Posterior vena cava (tissue), 2 donors: ENCODE measurements at regions of chr14 and their contacts with region 1.

Region 1: GRCh38 chr14:104639889-104640548 is 35.4 kb upstream of the TMEM179 start:
- DNase-seq: no peak

Region 2: DNA sequence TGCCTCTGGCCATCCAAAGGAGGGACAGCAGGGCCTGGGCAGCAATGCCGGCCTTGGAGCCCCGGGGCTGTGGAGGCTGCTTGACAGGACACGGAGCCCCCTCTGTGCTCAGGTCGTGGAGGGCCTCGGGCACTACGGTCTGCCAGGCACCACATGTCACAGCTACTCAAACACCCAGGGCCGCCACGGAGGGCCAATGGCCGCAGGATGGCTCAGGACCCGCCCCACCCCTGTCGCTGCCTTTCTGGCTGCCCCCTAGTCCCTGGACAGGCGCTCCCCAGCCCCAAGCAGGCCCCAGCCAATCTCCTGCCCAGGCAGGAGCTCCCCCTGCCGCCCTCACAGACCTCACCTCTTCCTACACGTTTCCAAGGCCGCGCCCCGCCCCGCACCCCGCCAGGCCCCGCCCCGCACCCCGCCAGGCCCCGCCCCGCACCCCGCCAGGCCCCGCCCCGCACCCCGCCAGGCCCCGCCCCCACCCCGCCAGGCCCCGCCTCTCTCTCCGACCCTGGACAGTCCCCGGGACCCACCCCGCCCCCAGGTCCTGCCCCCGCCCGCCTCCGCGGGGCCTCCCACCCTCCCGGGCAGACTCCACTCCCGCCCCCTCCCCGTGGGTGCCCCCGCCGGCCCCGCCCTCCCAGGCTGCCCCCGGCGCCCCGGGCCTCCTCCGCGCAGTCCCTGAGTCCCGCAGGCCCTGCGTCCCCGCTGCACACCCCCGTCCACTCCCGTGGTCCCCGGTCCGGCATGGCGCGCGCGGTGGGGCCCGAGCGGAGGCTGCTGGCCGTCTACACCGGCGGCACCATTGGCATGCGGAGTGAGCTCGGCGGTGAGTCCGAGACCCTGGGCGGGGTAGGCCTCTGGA is 554.8 kb before region 1 on chr14 and contains the start of gene ASPG:
- intact Hi-C with region 1: loop called in 1 of 2 experiments (anchors 5 kb)
- DNase-seq: peak; percentile 83
- total RNA-seq, gene ASPG: 1.3 to 3.2 TPM

Region 3: DNA sequence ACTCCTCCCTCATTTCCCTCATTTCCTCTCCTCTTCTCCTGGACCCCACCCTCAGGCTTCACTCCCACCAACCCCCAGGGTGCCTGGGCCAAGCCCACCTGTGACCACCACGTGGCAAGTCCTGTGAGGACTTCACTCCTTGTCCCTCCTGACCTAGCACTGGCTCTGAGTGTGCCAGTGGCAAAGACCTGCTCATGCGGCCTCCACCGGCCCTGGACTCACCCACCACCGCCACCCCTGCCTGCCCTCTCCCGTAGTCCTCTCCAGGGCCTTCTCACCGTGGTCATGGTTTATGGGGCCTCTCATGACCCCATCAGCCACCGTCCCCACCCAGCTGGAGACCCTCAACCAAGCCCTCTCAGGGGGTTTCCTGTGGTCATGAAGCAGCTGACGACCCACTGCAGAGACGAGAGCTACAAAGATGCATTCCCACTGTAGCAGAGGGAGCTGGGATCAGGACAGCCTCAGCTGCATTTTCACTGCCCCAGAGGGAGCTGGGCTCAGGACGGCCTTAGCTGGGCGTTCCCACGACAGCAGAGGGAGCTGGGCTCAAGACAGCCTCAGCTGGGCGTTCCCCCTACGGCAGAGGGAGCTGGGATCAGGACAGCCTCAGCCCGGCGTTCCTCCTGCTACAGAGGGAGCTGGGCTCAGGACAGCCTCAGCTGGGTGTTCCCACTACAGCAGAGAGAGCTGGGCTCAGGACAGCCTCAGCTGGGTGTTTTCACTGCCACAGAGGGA is 63.6 kb before region 1 on chr14:
- intact Hi-C with region 1: loop called in 1 of 2 experiments (anchors 5 kb)
- DNase-seq: no peak